ENCODE measurements at regions of chr1 and their contacts with region 1.

Region 1: GRCh38 chr1:15847100-15847892 is at the start of gene SPEN:
- DNase-seq: peak; percentile 99
- ATAC-seq: peak; percentile 74
- H3K4me3 Mint-ChIP-seq: peak within 1 kb of the TSS; percentile 99
- H3K27ac Mint-ChIP-seq: peak within 1 kb of the TSS; percentile 98
- H3K4me1 Mint-ChIP-seq: peaks cover 62% of the 10 kb centered on the region
- H3K27me3 Mint-ChIP-seq: no peaks in the 10 kb centered on the region
- CTCF ChIP-seq: no peak
- total RNA-seq, gene SPEN: 116 and 123 TPM in 2 replicates

Region 2: DNA sequence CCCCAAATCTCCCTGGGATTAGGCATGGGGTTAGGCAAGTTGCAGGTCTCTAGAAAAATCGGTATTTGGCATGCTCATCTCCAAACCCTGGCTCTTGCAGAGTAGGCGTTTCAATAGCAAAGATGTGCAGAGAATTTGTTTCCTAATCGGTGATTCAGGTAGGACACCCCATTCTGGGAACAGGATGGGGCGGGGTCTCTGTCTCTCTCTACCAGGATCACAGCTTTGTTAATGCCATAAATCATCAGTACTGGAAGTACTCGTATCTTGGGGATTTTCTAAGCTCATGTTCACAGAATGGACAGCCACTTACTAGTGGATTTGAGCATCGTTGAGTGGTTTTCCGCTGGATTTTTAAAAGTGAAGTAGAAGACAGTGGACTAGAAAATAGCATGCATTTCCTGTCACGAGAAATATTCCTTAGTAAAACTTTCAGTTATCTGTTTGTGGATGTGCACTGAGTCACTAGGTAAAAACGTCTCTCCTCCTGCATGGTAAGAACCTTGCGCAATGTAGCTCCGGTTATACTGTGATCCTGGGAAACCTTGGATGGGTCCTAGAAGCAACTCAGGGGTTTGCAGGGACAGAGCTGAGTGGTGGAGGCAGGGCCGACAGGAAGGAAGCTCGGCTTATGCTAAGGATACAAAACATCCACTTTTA is 688.7 kb before region 1 on chr1:
- CTCF ChIA-PET with region 1: no interaction called
- POLR2A ChIA-PET with region 1: no interaction called
- intact Hi-C with region 1: no loop called
- DNase-seq: no peak
- ATAC-seq: no peak
- H3K4me3 Mint-ChIP-seq: no peak overlapping the region
- H3K27ac Mint-ChIP-seq: no peak overlapping the region
- H3K4me1 Mint-ChIP-seq: peaks cover 17% of the 10 kb centered on the region
- H3K27me3 Mint-ChIP-seq: peaks cover 19% of the 10 kb centered on the region
- CTCF ChIP-seq: no peak

Region 3: GRCh38 chr1:15858069-15858670 is 10.9 kb after region 1 on chr1:
- CTCF ChIA-PET with region 1: interaction called, 3 read pairs
- POLR2A ChIA-PET with region 1: interaction called, 12 read pairs
- intact Hi-C with region 1: no loop called
- DNase-seq: no peak
- ATAC-seq: no peak
- H3K4me3 Mint-ChIP-seq: no peak overlapping the region
- H3K27ac Mint-ChIP-seq: peak overlapping the region; percentile 20
- H3K4me1 Mint-ChIP-seq: peaks cover 43% of the 10 kb centered on the region
- H3K27me3 Mint-ChIP-seq: no peaks in the 10 kb centered on the region
- CTCF ChIP-seq: no peak

Region 4: GRCh38 chr1:15918962-15919715 is 71.8 kb after region 1 on chr1:
- CTCF ChIA-PET with region 1: no interaction called
- POLR2A ChIA-PET with region 1: interaction called, 10 read pairs
- intact Hi-C with region 1: no loop called
- DNase-seq: no peak
- ATAC-seq: peak; percentile 70
- H3K4me3 Mint-ChIP-seq: no peak overlapping the region
- H3K27ac Mint-ChIP-seq: peak overlapping the region; percentile 32
- H3K4me1 Mint-ChIP-seq: peaks cover 31% of the 10 kb centered on the region
- H3K27me3 Mint-ChIP-seq: no peaks in the 10 kb centered on the region
- CTCF ChIP-seq: no peak

Region 5: GRCh38 chr1:16032388-16033103 is 185.2 kb after region 1 on chr1:
- CTCF ChIA-PET with region 1: no interaction called
- POLR2A ChIA-PET with region 1: no interaction called
- intact Hi-C with region 1: no loop called
- DNase-seq: peak; percentile 50
- ATAC-seq: peak; percentile 100
- H3K4me3 Mint-ChIP-seq: no peak overlapping the region
- H3K27ac Mint-ChIP-seq: no peak overlapping the region
- H3K4me1 Mint-ChIP-seq: peaks cover 2% of the 10 kb centered on the region
- H3K27me3 Mint-ChIP-seq: peaks cover 28% of the 10 kb centered on the region
- CTCF ChIP-seq: no peak